ENCODE measurements at regions of chr7 and their contacts with region 1.

Region 1: DNA sequence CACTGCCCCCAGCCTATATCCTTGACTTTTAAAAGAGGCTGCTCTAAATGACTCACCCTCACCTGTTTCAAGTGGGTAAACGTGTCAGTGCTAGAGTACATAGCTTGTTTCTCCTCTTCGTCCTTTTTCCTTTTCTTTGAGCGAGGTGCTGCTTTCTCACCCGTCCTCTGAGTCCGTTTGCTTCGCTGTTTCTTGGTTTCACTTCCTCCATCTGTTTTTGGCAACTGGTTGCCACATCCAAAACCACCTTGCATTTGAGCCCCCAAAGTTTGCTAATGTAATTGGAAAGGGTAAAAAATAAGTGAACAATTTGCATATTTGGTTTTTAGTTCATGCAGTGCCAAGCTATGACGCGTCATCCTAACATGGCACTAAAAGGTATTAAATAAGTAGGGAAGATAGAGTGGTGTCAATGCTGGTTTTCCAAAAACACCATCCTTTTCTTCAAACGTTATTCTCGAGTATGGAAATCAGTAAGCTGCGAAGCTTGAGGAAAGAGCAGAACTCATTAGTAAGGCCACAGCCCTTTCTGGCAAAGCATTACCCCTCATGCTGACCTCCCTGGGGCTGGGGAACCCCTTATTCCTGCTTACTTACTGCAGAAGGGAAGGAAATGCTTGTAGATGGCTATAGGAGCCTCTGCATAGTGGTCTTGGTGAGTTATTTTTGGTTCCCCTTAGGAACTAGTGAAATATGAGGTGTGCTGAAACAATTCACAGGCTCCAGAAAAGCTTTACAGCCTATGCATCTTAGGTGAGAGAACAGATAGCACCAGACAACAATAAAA is 133.5 kb downstream of the GALNT11 start:
- DNase-seq: peak; percentile 29
- ATAC-seq: peak; percentile 88
- H3K4me3 Mint-ChIP-seq: no peak overlapping the region
- H3K27ac Mint-ChIP-seq: peak overlapping the region; percentile 72
- H3K4me1 Mint-ChIP-seq: peaks cover 10% of the 10 kb centered on the region
- H3K27me3 Mint-ChIP-seq: no peaks in the 10 kb centered on the region
- CTCF ChIP-seq: no peak

Region 2: DNA sequence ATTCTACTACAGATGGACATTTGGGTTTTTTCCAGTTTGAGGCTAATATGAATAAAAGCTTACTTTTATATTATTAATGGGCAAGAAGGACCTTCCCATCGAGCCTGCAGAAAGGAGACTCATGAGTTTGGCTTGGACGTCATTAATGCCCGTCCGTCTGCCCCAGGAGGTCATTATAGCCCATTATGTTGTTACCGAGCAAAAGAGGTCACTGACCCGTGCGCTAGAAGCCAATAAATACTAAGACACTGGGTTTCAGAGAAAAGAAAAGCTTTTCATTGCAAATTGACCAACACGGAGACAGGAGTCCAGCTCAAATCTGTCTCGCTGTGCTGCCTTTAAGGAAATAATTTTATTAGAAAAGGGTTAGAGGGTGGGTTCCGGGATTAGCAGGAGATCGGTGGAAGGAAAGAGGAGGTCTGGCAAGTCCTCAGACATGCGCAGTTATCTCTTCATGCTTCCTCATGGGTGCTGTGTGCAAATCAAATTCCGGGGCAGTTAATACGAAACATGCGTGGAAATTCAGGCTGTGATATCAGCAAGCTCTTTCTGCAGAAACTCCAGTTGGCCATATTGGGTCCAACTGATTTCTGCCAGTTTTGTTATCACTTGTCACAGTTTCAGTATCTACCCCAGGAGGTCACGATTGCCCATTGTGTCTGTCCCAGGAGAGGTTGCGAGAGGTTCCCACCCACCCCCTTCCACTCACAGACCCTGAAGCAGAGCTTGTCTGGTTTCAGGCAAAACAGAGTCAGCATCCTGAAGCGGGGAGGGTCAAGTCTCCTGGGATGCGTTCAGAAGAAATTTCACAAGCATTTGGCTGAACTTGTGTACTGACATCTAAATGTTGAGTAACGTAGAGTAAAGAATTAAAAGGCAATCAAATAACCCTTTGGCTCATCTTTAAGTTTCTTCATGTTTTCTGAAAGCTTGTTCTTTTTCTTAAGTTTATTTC is 203.9 kb before region 1 on chr7:
- CTCF ChIA-PET with region 1: no interaction called
- POLR2A ChIA-PET with region 1: no interaction called
- intact Hi-C with region 1: no loop called
- DNase-seq: no peak
- ATAC-seq: no peak
- H3K4me3 Mint-ChIP-seq: no peak overlapping the region
- H3K27ac Mint-ChIP-seq: no peak overlapping the region
- H3K4me1 Mint-ChIP-seq: no peaks in the 10 kb centered on the region
- H3K27me3 Mint-ChIP-seq: peaks cover 2% of the 10 kb centered on the region
- CTCF ChIP-seq: no peak

Region 3: DNA sequence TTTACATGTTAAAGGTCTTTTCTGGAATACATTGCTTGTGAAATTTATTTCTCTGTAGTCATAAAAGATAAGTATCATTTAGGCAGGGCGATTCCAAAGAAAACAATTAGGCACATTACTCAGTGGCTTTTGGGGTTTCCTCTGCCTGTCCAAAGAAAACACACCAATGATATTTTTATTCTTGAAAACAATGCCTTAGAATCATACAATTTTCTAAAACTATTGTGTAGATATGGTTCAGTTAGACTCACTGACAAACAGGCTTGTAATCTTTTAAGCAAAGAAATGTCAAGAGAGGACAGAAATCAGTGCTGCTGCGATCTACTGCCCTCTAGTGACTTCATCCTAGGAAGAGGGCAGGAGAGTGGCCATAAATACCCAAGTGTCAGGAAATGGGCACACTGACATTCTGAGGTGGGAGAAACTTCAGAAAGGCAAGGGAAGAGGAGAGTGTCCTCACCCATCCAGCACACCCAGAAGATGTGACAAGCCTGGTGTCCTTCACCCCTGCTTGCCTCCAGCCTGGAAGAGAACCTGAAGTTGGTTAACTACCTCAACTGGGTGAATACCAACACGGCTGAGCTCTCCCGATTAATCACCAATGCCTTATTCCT is 13.0 kb before region 1 on chr7:
- CTCF ChIA-PET with region 1: interaction called, 12 read pairs
- POLR2A ChIA-PET with region 1: interaction called, 3 read pairs
- intact Hi-C with region 1: no loop called
- DNase-seq: peak; percentile 54
- ATAC-seq: peak; percentile 42
- H3K4me3 Mint-ChIP-seq: no peak overlapping the region
- H3K27ac Mint-ChIP-seq: peak overlapping the region; percentile 90
- H3K4me1 Mint-ChIP-seq: peaks cover 39% of the 10 kb centered on the region
- H3K27me3 Mint-ChIP-seq: no peaks in the 10 kb centered on the region
- CTCF ChIP-seq: peak; percentile 60